ENCODE measurements at regions of chr19 and their contacts with region 1.

Region 1: GRCh38 chr19:4342615-4343369 is 570 bp upstream of the MPND start:
- DNase-seq: peak; percentile 97
- ATAC-seq: peak; percentile 85
- H3K4me3 ChIP-seq: peak overlapping the region; percentile 63 to 89 (median 81)
- H3K4me3 Mint-ChIP-seq: peak overlapping the region; percentile 90
- H3K27ac ChIP-seq: peak overlapping the region; percentile 64 to 82
- H3K27ac Mint-ChIP-seq: peak overlapping the region; percentile 69
- H3K4me1 ChIP-seq: peaks cover 10 to 32% of the 10 kb centered on the region in 2 donors
- H3K4me1 Mint-ChIP-seq: peaks cover 27% of the 10 kb centered on the region
- H3K27me3 ChIP-seq: no peaks in the 10 kb centered on the region
- H3K27me3 Mint-ChIP-seq: no peaks in the 10 kb centered on the region
- CTCF ChIP-seq: no peak

Region 2: DNA sequence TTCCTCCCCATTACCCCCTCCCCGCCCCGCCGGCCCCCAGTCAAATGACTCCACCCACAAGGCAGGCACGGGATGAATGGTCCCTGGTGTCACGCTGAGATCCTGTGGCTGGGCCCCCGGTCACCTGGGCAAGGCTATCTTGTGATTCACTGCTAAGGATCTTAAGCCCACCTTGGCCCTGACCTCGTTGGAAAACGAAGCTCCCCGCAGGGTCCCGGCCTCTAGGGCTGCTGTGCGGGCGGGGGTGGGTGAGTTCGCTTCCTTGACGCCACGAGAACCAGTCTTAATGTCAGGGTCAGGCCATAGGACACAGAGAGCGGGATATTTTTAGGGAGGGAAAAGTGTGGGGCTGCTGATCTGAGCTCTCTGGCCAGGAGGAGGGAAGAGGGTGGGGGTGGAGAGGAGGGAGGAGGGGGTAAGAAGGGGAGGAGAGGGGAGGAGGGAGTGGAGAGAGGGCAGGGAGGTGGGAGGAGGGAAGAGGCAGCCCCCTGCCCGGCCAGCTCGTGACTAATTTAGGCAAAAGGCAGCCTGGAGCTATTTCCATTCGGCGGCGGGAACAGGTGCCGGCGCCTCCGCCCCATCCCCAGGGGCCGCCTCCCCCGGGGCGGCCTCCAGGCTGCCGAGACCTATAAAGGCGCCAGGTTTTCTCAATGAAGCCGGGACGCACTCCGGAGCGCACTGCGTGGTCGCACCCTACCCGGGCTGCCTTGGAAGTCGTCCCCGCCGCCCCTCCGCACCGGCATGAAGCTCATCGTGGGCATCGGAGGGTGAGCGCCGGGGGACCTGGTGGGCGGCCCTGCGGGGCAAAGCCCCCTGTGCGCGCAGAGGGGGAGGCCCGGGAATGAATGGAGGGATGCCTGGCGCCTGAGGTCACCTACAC is 409.6 kb before region 1 on chr19 and contains the start of gene NMRK2:
- CTCF ChIA-PET with region 1: no interaction called
- POLR2A ChIA-PET with region 1: no interaction called
- intact Hi-C with region 1: no loop called
- DNase-seq: no peak
- ATAC-seq: no peak
- H3K4me3 ChIP-seq: no peak within 1 kb of the TSS
- H3K4me3 Mint-ChIP-seq: no peak within 1 kb of the TSS
- H3K27ac ChIP-seq: no peak within 1 kb of the TSS
- H3K27ac Mint-ChIP-seq: no peak within 1 kb of the TSS
- H3K4me1 ChIP-seq: no peaks in the 10 kb centered on the region
- H3K4me1 Mint-ChIP-seq: no peaks in the 10 kb centered on the region
- H3K27me3 ChIP-seq: peaks cover 0 to 13% (median 6%) of the 10 kb centered on the region in 4 experiments
- H3K27me3 Mint-ChIP-seq: peaks cover 8% of the 10 kb centered on the region
- CTCF ChIP-seq: no peak
- total RNA-seq, gene NMRK2: not detected in 2 replicates

Region 3: DNA sequence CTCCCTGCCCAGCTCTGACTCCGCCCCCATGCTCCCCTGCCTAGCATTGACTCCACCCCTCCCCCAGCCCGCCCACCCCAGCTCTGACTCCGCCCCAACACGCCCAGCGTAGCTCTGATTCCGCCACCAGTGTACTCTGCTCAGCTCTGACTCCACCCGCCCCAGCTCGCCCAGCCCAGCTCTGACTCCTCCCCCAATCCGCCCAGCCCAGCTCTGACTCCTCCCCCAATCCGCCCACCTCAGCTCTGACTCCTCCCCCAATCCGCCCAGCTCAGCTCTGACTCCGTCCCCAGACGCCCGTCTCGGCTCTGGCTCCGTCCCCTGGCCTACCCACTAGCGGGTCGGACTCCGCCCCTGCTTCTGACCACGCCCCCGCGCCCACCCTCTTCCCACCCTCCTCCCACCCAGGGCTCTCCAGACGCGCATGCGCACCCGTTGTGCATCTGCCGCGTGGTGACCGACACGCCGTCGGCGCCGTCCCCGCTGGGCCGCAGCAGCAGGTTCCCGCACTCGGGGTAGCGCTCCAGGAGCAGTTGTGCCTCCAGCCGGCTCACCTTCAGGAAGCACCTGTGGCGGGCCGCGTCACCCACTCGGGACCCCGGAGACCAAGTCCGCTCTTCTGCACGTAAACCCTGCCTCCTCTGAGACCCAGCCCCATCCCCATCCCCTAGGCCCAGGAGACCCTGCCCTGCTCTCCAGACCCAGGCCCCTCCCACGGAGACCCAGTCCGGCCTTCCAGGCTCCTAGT is 14.4 kb before region 1 on chr19:
- CTCF ChIA-PET with region 1: interaction called, 5 read pairs
- POLR2A ChIA-PET with region 1: interaction called, 4 read pairs
- intact Hi-C with region 1: loop called (anchors 1 kb)
- DNase-seq: peak; percentile 93
- ATAC-seq: peak; percentile 86
- H3K4me3 ChIP-seq: peak overlapping the region in 4 of 5 experiments; percentile 37 to 54 (median 46)
- H3K4me3 Mint-ChIP-seq: peak overlapping the region; percentile 79
- H3K27ac ChIP-seq: peak overlapping the region in 1 of 2 donors; percentile 36
- H3K27ac Mint-ChIP-seq: peak overlapping the region; percentile 85
- H3K4me1 ChIP-seq: peaks cover 18 to 31% of the 10 kb centered on the region in 2 donors
- H3K4me1 Mint-ChIP-seq: peaks cover 28% of the 10 kb centered on the region
- H3K27me3 ChIP-seq: peaks cover 0 to 11% (median 0%) of the 10 kb centered on the region in 4 experiments
- H3K27me3 Mint-ChIP-seq: no peaks in the 10 kb centered on the region
- CTCF ChIP-seq: no peak

Region 4: GRCh38 chr19:4369888-4370260 is 27.1 kb after region 1 on chr19:
- CTCF ChIA-PET with region 1: interaction called, 4 read pairs
- POLR2A ChIA-PET with region 1: interaction called, 3 read pairs
- intact Hi-C with region 1: loop called (anchors 2 kb)
- DNase-seq: peak; percentile 70
- ATAC-seq: peak; percentile 48
- H3K4me3 ChIP-seq: peak overlapping the region in 4 of 5 experiments; percentile 40 to 68 (median 50)
- H3K4me3 Mint-ChIP-seq: peak overlapping the region; percentile 83
- H3K27ac ChIP-seq: peak overlapping the region; percentile 84 to 95
- H3K27ac Mint-ChIP-seq: peak overlapping the region; percentile 96
- H3K4me1 ChIP-seq: peaks cover 69 to 76% of the 10 kb centered on the region in 2 donors
- H3K4me1 Mint-ChIP-seq: peaks cover 62% of the 10 kb centered on the region
- H3K27me3 ChIP-seq: no peaks in the 10 kb centered on the region
- H3K27me3 Mint-ChIP-seq: no peaks in the 10 kb centered on the region
- CTCF ChIP-seq: peak; percentile 61

Measured in B cell (primary cell).